BJ (cell line): ENCODE measurements at regions of chr15 and their contacts with region 1.

Region 1: DNA sequence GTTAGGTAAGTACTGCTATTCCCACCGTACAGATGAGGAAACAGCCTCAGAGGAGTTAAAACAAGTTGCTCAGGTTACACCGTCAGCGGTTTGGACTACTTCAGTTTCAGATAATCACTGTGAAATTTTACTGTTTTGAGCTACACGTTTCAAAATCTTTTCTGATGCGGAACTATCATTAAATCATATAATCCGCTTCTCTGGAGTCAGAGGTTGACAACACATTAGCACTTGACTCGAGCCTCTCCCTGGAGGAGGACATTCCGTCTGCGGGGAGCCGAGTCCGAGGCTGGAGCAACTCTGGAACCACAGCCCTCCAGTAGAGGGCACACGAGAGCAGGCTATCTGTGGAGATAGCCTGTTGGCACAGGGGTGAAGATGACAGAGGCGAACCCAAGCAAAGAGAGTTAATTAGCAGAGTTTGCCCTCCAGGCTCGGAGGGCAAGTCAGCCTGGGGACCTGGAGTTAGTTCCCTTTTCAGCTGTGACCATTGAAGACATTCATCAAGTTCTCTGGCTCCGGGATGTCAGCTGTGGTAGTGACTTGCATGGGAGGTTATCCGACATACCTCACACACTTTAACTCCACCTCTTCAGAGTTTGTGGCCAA is 131.2 kb downstream of the IGF1R start:
- DNase-seq: no peak
- H3K4me3 ChIP-seq: no peak overlapping the region
- H3K27me3 ChIP-seq: no peaks in the 10 kb centered on the region
- CTCF ChIP-seq: peak; percentile 96

Region 2: DNA sequence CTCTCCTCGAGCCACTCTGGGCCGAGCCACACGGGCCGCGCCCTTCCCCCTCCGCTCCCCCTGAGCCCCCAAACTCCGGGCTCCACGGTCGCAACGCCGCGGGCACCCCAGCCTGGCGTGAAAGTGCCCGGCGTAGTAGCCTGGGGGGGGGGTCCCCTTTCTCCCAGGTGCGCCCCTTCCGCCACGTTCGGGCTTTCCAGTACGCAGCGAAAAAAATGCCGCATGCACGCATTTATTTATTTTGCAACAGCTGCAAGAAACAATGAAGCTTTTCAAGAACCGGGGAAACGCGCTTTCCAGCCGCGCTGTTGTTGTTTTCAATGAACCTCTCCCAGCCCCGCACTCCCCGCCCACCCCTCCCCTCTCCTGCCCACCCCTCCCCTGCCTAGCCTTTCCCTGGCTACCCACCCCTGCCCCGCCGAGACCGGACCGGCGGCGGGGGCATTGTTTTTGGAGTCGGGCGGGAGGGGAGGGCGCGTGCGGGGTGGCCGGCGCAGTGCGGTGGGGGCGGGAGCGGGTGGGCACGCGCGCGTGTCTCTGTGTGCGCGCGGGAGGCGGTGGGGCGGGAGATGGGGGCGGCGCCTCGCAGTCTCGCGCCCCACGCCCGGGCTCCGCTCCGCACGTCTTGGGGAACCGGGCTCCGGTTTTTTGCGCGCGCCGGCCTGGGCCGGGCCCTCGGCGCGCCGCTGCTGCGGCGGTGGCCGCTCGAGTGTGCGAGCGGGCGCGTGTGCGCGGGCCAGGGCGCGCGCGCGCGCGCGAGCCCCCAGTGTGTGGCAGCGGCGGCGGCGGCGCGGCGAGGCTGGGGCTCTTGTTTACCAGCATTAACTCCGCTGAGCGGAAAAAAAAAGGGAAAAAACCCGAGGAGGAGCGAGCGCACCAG is 131.6 kb before region 1 on chr15 and contains the start of gene IGF1R:
- CTCF ChIA-PET with region 1: interaction called, 3 read pairs
- POLR2A ChIA-PET with region 1: interaction called, 10 read pairs
- DNase-seq: no peak
- H3K4me3 ChIP-seq: peak within 1 kb of the TSS; percentile 95
- H3K27me3 ChIP-seq: peaks cover 9% of the 10 kb centered on the region
- CTCF ChIP-seq: 0 out of 2 replicates have a peak, but pooled peaks have one; percentile 22
- polyA plus RNA-seq, gene IGF1R: 21.2 and 36.2 TPM in 2 replicates

Region 3: GRCh38 chr15:98760112-98760826 is 19.3 kb before region 1 on chr15:
- CTCF ChIA-PET with region 1: interaction called, 16 read pairs
- POLR2A ChIA-PET with region 1: no interaction called
- DNase-seq: no peak
- H3K4me3 ChIP-seq: no peak overlapping the region
- H3K27me3 ChIP-seq: no peaks in the 10 kb centered on the region
- CTCF ChIP-seq: no peak

Region 4: DNA sequence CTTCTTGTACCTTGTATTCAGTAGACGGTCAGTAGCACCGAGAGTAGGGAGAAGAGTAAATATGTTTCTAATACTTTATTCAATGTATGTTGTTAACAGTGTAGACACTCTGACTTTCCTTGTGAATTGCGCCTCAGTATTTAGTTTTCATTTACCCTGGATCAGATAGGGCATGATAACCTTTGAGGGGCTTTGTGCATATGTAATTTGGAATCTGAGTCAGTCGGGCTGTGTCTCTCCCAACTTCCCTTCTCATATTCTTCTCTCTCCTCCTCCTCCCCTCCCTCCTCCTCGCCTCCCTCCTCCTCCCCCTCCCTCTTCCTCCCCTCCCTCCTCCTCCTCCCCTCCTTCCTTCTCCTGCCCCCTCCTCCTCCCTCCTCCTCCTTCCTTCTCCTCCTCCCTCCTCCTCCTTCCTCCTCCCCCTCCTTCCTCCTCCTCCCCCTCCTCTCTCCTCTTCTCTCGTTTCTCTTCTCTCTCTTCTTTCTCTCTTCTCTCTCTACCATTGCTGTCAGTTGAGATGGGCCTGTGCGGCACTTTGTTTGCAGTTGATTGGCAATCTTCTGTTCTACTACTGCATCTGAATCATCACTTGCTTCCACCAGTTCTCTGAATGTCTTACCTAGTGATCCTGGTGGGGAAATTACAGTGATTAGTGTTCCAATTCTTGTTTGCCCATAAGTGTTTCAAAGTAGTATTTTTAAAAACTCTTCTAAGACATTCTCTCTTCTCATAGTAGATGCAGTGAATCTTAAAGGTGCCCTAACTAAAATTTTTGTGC is 65.7 kb after region 1 on chr15:
- CTCF ChIA-PET with region 1: interaction called, 10 read pairs
- POLR2A ChIA-PET with region 1: no interaction called
- DNase-seq: no peak
- H3K4me3 ChIP-seq: no peak overlapping the region
- H3K27me3 ChIP-seq: no peaks in the 10 kb centered on the region
- CTCF ChIP-seq: no peak

Region 5: GRCh38 chr15:98881526-98882520 is 102.3 kb after region 1 on chr15:
- CTCF ChIA-PET with region 1: interaction called, 10 read pairs
- POLR2A ChIA-PET with region 1: no interaction called
- DNase-seq: no peak
- H3K4me3 ChIP-seq: no peak overlapping the region
- H3K27me3 ChIP-seq: no peaks in the 10 kb centered on the region
- CTCF ChIP-seq: peak; percentile 37; the same call in 1 of the 2 replicates

Region 6: GRCh38 chr15:99385865-99386264 is 606.3 kb after region 1 on chr15:
- CTCF ChIA-PET with region 1: no interaction called
- POLR2A ChIA-PET with region 1: no interaction called
- DNase-seq: no peak
- H3K4me3 ChIP-seq: no peak overlapping the region
- H3K27me3 ChIP-seq: no peaks in the 10 kb centered on the region
- CTCF ChIP-seq: no peak